SK-N-SH (cell line): ENCODE measurements at regions of chr11 and their contacts with region 1.

Region 1: GRCh38 chr11:78916759-78917158 is 342.1 kb upstream of the NARS2 start:
- DNase-seq: no peak
- H3K4me3 ChIP-seq: no peak overlapping the region
- H3K27ac ChIP-seq: no peak overlapping the region
- H3K4me1 ChIP-seq: peaks cover 0 to 37% of the 10 kb centered on the region in 2 experiments; a peak in 2 of 4 replicates
- H3K27me3 ChIP-seq: no peaks in the 10 kb centered on the region
- CTCF ChIP-seq: peak; percentile 26
- EP300 ChIP-seq: no peak
- RAD21 ChIP-seq: peak; percentile 29

Region 2: GRCh38 chr11:78902771-78903507 is 13.8 kb before region 1 on chr11:
- CTCF ChIA-PET with region 1: interaction called, 11 read pairs
- POLR2A ChIA-PET with region 1: no interaction called
- DNase-seq: no peak
- H3K4me3 ChIP-seq: no peak overlapping the region
- H3K27ac ChIP-seq: no peak overlapping the region
- H3K4me1 ChIP-seq: peaks cover 2 to 8% of the 10 kb centered on the region in 2 experiments; a peak in 1 of 4 replicates
- H3K27me3 ChIP-seq: no peaks in the 10 kb centered on the region
- CTCF ChIP-seq: no peak
- EP300 ChIP-seq: no peak
- RAD21 ChIP-seq: no peak